ENCODE measurements at regions of chr15 and their contacts with region 1.

Region 1: GRCh38 chr15:40893733-40894688 is at the start of gene VPS18:
- DNase-seq: peak; percentile 100
- H3K4me3 Mint-ChIP-seq: peak within 1 kb of the TSS; percentile 100
- H3K27ac Mint-ChIP-seq: peak within 1 kb of the TSS; percentile 95
- H3K4me1 Mint-ChIP-seq: peaks cover 32% of the 10 kb centered on the region
- H3K27me3 Mint-ChIP-seq: peaks cover 3% of the 10 kb centered on the region
- total RNA-seq, gene VPS18: 11.2 and 11.3 TPM in 2 replicates

Region 2: GRCh38 chr15:40684381-40684780 is 209.6 kb before region 1 on chr15:
- intact Hi-C with region 1: loop called (anchors 2 kb)
- DNase-seq: no peak
- H3K4me3 Mint-ChIP-seq: no peak overlapping the region
- H3K27ac Mint-ChIP-seq: no peak overlapping the region
- H3K4me1 Mint-ChIP-seq: no peaks in the 10 kb centered on the region
- H3K27me3 Mint-ChIP-seq: no peaks in the 10 kb centered on the region

Region 3: GRCh38 chr15:40763801-40764732 is 129.9 kb before region 1 on chr15 and contains the start of gene GCHFR:
- intact Hi-C with region 1: loop called (anchors 5 kb)
- DNase-seq: peak; percentile 94
- H3K4me3 Mint-ChIP-seq: peak within 1 kb of the TSS; percentile 76
- H3K27ac Mint-ChIP-seq: peak within 1 kb of the TSS; percentile 89
- H3K4me1 Mint-ChIP-seq: peaks cover 27% of the 10 kb centered on the region
- H3K27me3 Mint-ChIP-seq: peaks cover 2% of the 10 kb centered on the region
- total RNA-seq, gene GCHFR: 34.7 and 37.2 TPM in 2 replicates

Region 4: GRCh38 chr15:40807028-40807887 is 86.8 kb before region 1 on chr15 and contains the starts of genes DNAJC17 and ZFYVE19:
- intact Hi-C with region 1: loop called (anchors 1 kb)
- DNase-seq: peak; percentile 98
- H3K4me3 Mint-ChIP-seq: peak within 1 kb of the TSS; percentile 93
- H3K27ac Mint-ChIP-seq: peak within 1 kb of the TSS; percentile 96
- H3K4me1 Mint-ChIP-seq: peaks cover 13% of the 10 kb centered on the region
- H3K27me3 Mint-ChIP-seq: no peaks in the 10 kb centered on the region
- total RNA-seq, gene DNAJC17: 53.8 and 54.3 TPM in 2 replicates
- total RNA-seq, gene ZFYVE19: 35.6 and 37.6 TPM in 2 replicates

Region 5: GRCh38 chr15:40843885-40844695 is 49.9 kb before region 1 on chr15 and contains the start of gene SPINT1:
- intact Hi-C with region 1: loop called (anchors 1 kb)
- DNase-seq: peak; percentile 81
- H3K4me3 Mint-ChIP-seq: peak within 1 kb of the TSS; percentile 90
- H3K27ac Mint-ChIP-seq: peak within 1 kb of the TSS; percentile 56
- H3K4me1 Mint-ChIP-seq: peaks cover 27% of the 10 kb centered on the region
- H3K27me3 Mint-ChIP-seq: peaks cover 19% of the 10 kb centered on the region
- total RNA-seq, gene SPINT1: 11.3 and 12.9 TPM in 2 replicates

Region 6: GRCh38 chr15:40857601-40858341 is 36.2 kb before region 1 on chr15:
- intact Hi-C with region 1: loop called (anchors 1 kb)
- DNase-seq: peak; percentile 96
- H3K4me3 Mint-ChIP-seq: no peak overlapping the region
- H3K27ac Mint-ChIP-seq: no peak overlapping the region
- H3K4me1 Mint-ChIP-seq: peaks cover 15% of the 10 kb centered on the region
- H3K27me3 Mint-ChIP-seq: peaks cover 4% of the 10 kb centered on the region

Region 7: GRCh38 chr15:40873625-40874561 is 20.1 kb before region 1 on chr15 and contains the start of gene RHOV:
- intact Hi-C with region 1: loop called (anchors 2 kb)
- DNase-seq: peak; percentile 89
- H3K4me3 Mint-ChIP-seq: peak within 1 kb of the TSS; percentile 89
- H3K27ac Mint-ChIP-seq: peak within 1 kb of the TSS; percentile 75
- H3K4me1 Mint-ChIP-seq: peaks cover 30% of the 10 kb centered on the region
- H3K27me3 Mint-ChIP-seq: peaks cover 18% of the 10 kb centered on the region
- total RNA-seq, gene RHOV: 1.0 and 1.5 TPM in 2 replicates

Region 8: DNA sequence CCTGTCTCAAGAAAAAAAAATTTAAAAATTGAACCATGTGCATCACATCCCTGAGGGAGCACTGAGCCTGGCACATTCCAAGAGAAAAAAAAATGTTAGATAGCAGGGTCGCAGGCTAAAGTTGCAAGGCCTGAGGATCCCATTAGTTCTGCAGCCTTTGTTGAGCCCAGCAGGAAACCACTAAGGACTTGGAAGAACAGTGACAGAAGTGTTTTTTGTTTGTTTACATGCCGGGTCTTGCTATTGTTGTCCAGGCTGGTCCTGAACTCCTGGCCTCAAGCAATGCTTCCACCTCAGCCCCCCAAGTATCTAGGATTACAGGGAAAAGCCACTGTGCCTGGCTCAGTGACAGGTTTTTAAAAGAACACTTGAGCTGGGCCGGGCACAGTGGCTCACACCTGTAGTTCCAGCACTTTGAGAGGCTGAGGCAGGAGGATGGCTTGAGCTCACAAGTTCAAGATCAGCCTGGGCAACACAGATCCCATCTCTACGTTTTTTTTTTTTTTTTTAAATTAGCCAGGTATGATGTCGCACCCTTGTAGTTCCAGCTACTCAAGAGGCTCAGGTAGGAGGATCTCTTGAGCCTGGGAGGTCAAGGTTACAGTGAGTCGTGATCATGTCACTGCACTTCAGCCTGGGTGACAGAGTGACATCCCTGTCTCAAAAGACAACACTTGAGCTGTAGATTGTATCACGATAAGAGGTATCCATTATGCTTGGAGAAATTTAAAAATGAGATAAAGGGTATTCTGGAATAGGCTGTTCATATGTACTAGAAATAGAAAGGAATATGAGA is 74.5 kb after region 1 on chr15:
- intact Hi-C with region 1: no loop called
- DNase-seq: no peak
- H3K4me3 Mint-ChIP-seq: no peak overlapping the region
- H3K27ac Mint-ChIP-seq: no peak overlapping the region
- H3K4me1 Mint-ChIP-seq: no peaks in the 10 kb centered on the region
- H3K27me3 Mint-ChIP-seq: no peaks in the 10 kb centered on the region

Region 9: DNA sequence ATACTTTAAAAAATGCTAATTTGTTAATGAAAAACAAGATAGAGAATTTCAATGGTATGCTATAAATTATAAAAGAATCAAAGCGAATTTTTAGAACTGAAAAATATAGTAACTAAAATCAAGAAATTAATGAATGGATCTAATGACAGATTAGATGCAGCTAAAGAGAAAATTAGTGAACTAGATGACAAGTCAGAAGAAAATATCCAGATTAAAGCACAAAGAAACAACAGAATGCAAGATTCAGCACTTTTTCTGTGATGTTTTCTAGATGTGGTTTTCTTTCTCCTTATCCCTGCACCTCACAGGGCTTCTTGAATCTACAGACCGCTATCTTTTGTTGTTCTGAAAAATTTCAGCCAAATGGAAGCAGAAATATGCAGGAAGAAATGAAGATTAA is 167.7 kb after region 1 on chr15:
- intact Hi-C with region 1: no loop called
- DNase-seq: no peak
- H3K4me3 Mint-ChIP-seq: no peak overlapping the region
- H3K27ac Mint-ChIP-seq: no peak overlapping the region
- H3K4me1 Mint-ChIP-seq: no peaks in the 10 kb centered on the region
- H3K27me3 Mint-ChIP-seq: no peaks in the 10 kb centered on the region

Measured in activated CD4-positive, alpha-beta T cell treated with anti-CD3 and anti-CD28 coated beads, Interleukin-2, amount 10 ng/mL, durations not matched to agents 24 days and 14 days (primary cell).